ENCODE measurements at regions of chr1 and their contacts with region 1.

Region 1: GRCh38 chr1:45303582-45304310 is 22.9 kb upstream of the HPDL start:
- ATAC-seq: peak; percentile 88 to 93 (median 90)
- H3K4me3 ChIP-seq: peak overlapping the region; percentile 60 to 83 (median 71)
- H3K27ac ChIP-seq: peak overlapping the region; percentile 81 to 90
- H3K4me1 ChIP-seq: peaks cover 10 to 22% of the 10 kb centered on the region in 2 donors

Region 2: DNA sequence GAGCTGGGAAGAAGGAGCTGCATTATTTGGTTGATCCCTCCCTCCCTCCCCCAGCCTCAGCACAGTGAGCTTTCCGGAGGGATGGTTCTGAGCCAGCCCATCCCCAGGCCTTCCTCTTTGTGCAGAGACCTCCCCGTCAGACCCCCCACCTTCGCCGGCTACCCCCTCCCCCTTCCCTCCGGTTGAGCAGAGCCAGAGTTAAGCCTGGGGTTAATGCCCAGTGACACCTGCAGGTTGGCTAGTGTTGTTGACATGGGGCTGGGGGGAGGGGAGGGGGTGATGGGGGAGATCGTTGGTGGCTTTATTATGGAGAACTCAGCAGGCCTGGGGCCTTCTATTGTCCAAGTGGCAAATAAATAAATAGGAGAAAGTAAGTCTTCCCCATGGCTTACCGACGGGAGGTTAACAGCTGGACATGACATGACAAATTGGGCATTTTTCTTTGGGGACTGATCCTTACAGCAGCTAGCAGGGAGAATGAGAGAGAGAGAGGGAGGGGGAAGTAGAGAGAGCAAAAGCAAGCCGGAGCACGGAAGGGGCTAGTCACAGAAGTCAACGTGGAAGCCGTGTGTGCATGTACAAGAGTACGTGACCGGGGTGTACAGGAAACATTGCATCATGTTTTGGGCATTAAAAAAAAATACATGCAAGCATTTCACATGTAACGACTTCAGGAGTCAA is 760.5 kb before region 1 on chr1:
- in situ Hi-C with region 1: no loop called
- ATAC-seq: peak in 5 of 8 experiments; percentile 59 to 79 (median 75)
- H3K4me3 ChIP-seq: peak overlapping the region in 3 of 5 donors; percentile 8 to 13 (median 13)
- H3K27ac ChIP-seq: peak overlapping the region; percentile 94
- H3K4me1 ChIP-seq: peaks cover 66 to 84% of the 10 kb centered on the region in 2 donors

Region 3: GRCh38 chr1:44730741-44731512 is 572.8 kb before region 1 on chr1 and contains the start of gene RNU5D-1:
- in situ Hi-C with region 1: loop called in 1 of 9 experiments (anchors 25 kb)
- ATAC-seq: peak; percentile 79 to 88 (median 85)
- H3K4me3 ChIP-seq: peak within 1 kb of the TSS; percentile 13 to 24 (median 17)
- H3K27ac ChIP-seq: peak within 1 kb of the TSS; percentile 96 to 99
- H3K4me1 ChIP-seq: peaks cover 0 to 4% of the 10 kb centered on the region in 2 donors
- total RNA-seq, gene RNU5D-1: under 0.01 TPM in 4 of 8 experiments, not detected in the others

Region 4: GRCh38 chr1:45011837-45012638 is 291.7 kb before region 1 on chr1 and contains the start of gene UROD:
- in situ Hi-C with region 1: loop called in 6 of 9 experiments (anchors 5 to 25 kb)
- ATAC-seq: peak; percentile 56 to 76 (median 73)
- H3K4me3 ChIP-seq: peak within 1 kb of the TSS; percentile 92 to 100 (median 100)
- H3K27ac ChIP-seq: peak within 1 kb of the TSS; percentile 39 to 51
- H3K4me1 ChIP-seq: peaks cover 14 to 26% of the 10 kb centered on the region in 2 donors
- total RNA-seq, gene UROD: 60.9 to 229 (median 99.3) TPM

Region 5: DNA sequence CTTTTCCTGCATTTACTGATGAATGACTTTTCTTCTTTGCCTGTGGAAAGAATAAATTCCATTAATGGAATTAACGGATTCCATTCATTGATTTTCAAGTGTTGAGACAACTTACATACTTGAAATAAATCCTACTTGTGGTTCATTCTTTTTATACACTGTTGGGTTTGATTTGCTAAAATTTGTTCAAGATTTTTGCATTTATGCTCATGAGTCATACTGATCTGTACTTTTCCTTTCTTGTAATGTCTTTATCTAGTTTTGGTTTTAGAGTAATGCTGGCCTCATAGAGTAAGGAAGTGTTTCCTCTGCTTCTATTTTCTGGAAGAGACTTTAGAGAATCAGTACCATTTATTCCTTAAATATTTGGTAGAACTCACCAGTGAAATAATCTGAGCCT is 277.3 kb before region 1 on chr1:
- in situ Hi-C with region 1: loop called in 4 of 9 experiments (anchors 10 to 25 kb)
- ATAC-seq: peak in 2 of 8 experiments; percentile 72 to 89
- H3K4me3 ChIP-seq: no peak overlapping the region
- H3K27ac ChIP-seq: no peak overlapping the region
- H3K4me1 ChIP-seq: no peaks in the 10 kb centered on the region